ENCODE measurements at regions of chr9 and their contacts with region 1.

Region 1: DNA sequence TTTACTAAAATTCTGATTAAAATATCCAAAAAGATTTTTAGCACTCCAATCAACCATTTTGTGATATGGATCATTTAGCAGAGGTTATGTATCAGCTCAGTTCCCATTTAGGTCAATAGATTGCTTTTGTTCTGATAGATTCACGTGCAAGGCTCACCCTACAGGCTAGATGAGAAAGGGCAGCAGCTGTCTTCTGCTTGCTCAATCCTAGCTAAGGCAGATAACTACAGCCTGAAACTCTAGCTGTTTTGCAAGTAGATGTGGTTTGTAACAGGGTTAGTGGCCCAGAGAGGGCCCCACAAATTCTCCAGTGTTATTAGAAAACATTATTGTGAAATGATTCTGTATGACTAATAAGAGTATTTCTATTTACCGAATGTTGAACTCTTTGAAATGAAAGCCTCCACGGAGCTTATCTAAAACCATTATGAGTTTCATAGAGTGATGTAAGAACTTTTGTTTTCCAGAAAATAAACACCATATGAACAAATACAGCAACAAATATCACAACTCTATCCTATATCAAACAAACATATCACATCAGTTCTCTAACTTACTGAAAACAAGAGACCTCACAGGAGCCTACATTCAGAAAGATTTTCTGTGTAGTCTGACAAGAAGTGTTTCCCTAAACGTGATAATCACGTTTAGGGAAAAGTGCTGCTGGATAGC is 841.9 kb upstream of the ACO1 start:
- DNase-seq: peak; percentile 11
- H3K4me3 Mint-ChIP-seq: no peak overlapping the region
- H3K27ac Mint-ChIP-seq: peak overlapping the region; percentile 39
- H3K4me1 Mint-ChIP-seq: peaks cover 18% of the 10 kb centered on the region
- H3K27me3 Mint-ChIP-seq: no peaks in the 10 kb centered on the region

Region 2: GRCh38 chr9:31140316-31140715 is 402.2 kb before region 1 on chr9:
- intact Hi-C with region 1: loop called (anchors 10 kb)
- DNase-seq: no peak
- H3K4me3 Mint-ChIP-seq: no peak overlapping the region
- H3K27ac Mint-ChIP-seq: no peak overlapping the region
- H3K4me1 Mint-ChIP-seq: no peaks in the 10 kb centered on the region
- H3K27me3 Mint-ChIP-seq: no peaks in the 10 kb centered on the region

Region 3: DNA sequence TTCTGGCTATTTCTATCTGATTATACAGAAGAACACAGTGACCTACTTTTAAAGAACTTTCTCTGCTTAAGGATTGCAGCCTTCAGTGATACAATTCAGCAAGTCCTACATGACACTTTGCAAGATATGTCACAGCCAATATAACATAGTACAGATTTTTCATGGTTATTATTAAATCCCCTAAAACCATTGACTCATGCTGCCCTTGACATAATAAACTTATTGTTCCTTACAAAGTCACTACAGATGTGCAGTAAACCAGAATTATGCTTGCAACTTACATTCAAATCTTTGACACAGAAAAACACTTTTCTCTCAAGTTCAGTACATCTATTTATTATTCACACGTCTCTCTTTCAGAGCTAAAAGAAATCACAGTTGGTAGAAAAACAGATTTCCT is 294.4 kb before region 1 on chr9:
- intact Hi-C with region 1: no loop called
- DNase-seq: no peak
- H3K4me3 Mint-ChIP-seq: no peak overlapping the region
- H3K27ac Mint-ChIP-seq: no peak overlapping the region
- H3K4me1 Mint-ChIP-seq: no peaks in the 10 kb centered on the region
- H3K27me3 Mint-ChIP-seq: no peaks in the 10 kb centered on the region

Region 4: GRCh38 chr9:31347082-31347617 is 195.4 kb before region 1 on chr9:
- intact Hi-C with region 1: loop called (anchors 10 kb)
- DNase-seq: no peak
- H3K4me3 Mint-ChIP-seq: peak overlapping the region; percentile 71
- H3K27ac Mint-ChIP-seq: peak overlapping the region; percentile 94
- H3K4me1 Mint-ChIP-seq: peaks cover 33% of the 10 kb centered on the region
- H3K27me3 Mint-ChIP-seq: no peaks in the 10 kb centered on the region

Region 5: GRCh38 chr9:31418419-31418818 is 124.1 kb before region 1 on chr9:
- intact Hi-C with region 1: loop called (anchors 10 kb)
- DNase-seq: no peak
- H3K4me3 Mint-ChIP-seq: no peak overlapping the region
- H3K27ac Mint-ChIP-seq: no peak overlapping the region
- H3K4me1 Mint-ChIP-seq: no peaks in the 10 kb centered on the region
- H3K27me3 Mint-ChIP-seq: no peaks in the 10 kb centered on the region

Region 6: DNA sequence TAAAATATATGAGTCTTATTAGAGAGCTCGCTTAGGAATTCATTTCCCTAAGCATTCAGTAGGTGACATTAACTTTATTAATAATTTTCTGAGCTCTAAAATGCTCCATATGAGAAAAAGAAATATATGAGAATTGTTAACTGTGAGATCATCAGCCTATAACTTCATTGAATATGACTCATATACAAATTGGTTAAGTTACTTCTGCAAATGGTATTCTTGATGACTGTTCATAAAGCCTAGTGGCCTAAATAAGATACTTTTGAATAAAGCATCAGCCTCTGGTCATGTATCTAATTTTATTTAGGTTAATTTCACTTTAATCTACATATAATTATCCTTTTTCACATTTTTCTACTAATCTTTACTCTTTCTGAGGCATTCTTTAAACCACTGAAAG is 131.7 kb after region 1 on chr9:
- intact Hi-C with region 1: loop called (anchors 5 kb)
- DNase-seq: no peak
- H3K4me3 Mint-ChIP-seq: no peak overlapping the region
- H3K27ac Mint-ChIP-seq: no peak overlapping the region
- H3K4me1 Mint-ChIP-seq: peaks cover 32% of the 10 kb centered on the region
- H3K27me3 Mint-ChIP-seq: no peaks in the 10 kb centered on the region

Region 7: DNA sequence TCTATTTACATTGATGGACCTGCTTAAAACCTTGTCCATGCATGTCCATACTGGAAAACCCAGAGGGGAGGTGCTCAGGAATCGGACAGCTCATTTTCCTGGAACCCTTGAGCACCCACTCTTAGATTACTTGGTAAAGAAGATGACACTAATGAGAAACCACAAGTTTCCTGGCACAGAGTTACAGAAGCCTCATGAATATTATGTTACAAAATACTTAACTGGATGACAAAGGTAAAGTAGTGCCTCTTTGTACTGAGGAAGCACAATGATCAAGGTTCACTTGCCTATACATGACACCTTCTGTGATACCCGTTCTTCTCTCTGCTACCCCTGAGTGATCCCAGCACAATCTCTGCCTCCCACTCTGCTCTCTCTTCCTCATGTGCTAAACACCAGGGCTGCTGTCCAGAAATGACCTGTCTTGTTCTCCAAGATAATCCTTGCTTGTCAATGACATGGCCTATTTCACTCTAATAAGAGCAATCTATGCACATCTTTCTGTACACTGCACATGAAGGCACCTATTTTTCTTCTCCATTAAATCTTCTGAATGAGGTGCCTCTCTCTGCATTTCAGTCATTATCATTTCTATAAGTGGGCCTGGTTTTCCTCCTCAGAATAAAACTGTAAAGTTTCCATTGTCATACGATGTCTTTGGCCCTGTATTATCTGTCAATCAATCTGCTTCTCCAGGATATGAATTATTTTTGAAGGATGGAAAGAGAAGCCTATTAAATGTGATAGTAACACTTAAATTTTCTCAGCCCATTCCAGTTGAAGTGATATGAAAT is 157.9 kb after region 1 on chr9:
- intact Hi-C with region 1: loop called (anchors 2 kb)
- DNase-seq: no peak
- H3K4me3 Mint-ChIP-seq: no peak overlapping the region
- H3K27ac Mint-ChIP-seq: peak overlapping the region; percentile 74
- H3K4me1 Mint-ChIP-seq: peaks cover 13% of the 10 kb centered on the region
- H3K27me3 Mint-ChIP-seq: no peaks in the 10 kb centered on the region

Region 8: GRCh38 chr9:31799953-31800609 is 257.6 kb after region 1 on chr9:
- intact Hi-C with region 1: loop called (anchors 10 kb)
- DNase-seq: no peak
- H3K4me3 Mint-ChIP-seq: no peak overlapping the region
- H3K27ac Mint-ChIP-seq: peak overlapping the region; percentile 52
- H3K4me1 Mint-ChIP-seq: peaks cover 8% of the 10 kb centered on the region
- H3K27me3 Mint-ChIP-seq: peaks cover 3% of the 10 kb centered on the region